CD4-positive, alpha-beta memory T cell (primary cell): ENCODE measurements at regions of chr1 and their contacts with region 1.

Region 1: GRCh38 chr1:61851849-61852669 is 109.8 kb downstream of the PATJ start:
- DNase-seq: peak; percentile 17 to 61 (median 48)
- H3K4me3 ChIP-seq: no peak overlapping the region
- H3K4me3 Mint-ChIP-seq: no peak overlapping the region
- H3K27ac ChIP-seq: no peak overlapping the region
- H3K27ac Mint-ChIP-seq: no peak overlapping the region
- H3K4me1 ChIP-seq: no peaks in the 10 kb centered on the region
- H3K4me1 Mint-ChIP-seq: peaks cover 0 to 2% (median under 1%) of the 10 kb centered on the region in 4 donors
- H3K27me3 ChIP-seq: no peaks in the 10 kb centered on the region
- H3K27me3 Mint-ChIP-seq: no peaks in the 10 kb centered on the region

Region 2: DNA sequence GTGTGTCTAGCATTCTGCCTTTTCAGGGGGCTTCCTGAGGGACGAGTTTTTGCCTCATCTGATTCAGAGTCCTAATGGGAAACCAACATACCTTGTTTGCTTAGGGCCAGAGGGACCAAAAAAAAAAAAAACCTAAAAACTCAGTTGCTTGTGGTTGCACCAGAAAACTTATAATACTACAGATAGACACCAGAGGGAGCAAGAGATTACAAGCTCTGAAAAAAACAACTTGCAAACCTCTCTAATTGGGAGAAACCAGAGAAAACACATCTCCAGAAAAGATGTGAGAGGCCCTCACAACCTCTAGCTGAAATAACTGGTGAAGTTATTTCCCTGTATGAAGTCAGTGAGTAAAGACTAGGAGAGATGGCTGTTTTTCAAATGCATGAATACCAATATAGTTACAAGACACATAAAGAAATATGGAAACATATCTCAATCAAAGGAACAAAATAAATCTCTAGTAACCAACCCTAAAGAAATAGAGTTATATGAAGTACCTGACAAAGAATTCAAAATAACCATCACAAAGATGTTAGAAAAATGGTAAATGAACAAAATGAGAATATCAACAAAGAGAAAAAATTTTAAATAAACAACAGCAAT is 1003.4 kb before region 1 on chr1:
- CTCF ChIA-PET with region 1: no interaction called
- POLR2A ChIA-PET with region 1: no interaction called
- intact Hi-C with region 1: loop called (anchors 5 kb)
- DNase-seq: peak in 2 of 5 donors; percentile 2 to 5
- H3K4me3 ChIP-seq: no peak overlapping the region
- H3K4me3 Mint-ChIP-seq: no peak overlapping the region
- H3K27ac ChIP-seq: no peak overlapping the region
- H3K27ac Mint-ChIP-seq: no peak overlapping the region
- H3K4me1 ChIP-seq: no peaks in the 10 kb centered on the region
- H3K4me1 Mint-ChIP-seq: no peaks in the 10 kb centered on the region
- H3K27me3 ChIP-seq: no peaks in the 10 kb centered on the region
- H3K27me3 Mint-ChIP-seq: peaks cover 4% of the 10 kb centered on the region in 2 donors

Region 3: GRCh38 chr1:61539720-61540462 is 312.2 kb before region 1 on chr1:
- CTCF ChIA-PET with region 1: interaction called, 19 read pairs
- POLR2A ChIA-PET with region 1: no interaction called
- intact Hi-C with region 1: no loop called
- DNase-seq: no peak
- H3K4me3 ChIP-seq: no peak overlapping the region
- H3K4me3 Mint-ChIP-seq: no peak overlapping the region
- H3K27ac ChIP-seq: no peak overlapping the region
- H3K27ac Mint-ChIP-seq: no peak overlapping the region
- H3K4me1 ChIP-seq: no peaks in the 10 kb centered on the region
- H3K4me1 Mint-ChIP-seq: peaks cover 0 to 5% (median under 1%) of the 10 kb centered on the region in 4 donors
- H3K27me3 ChIP-seq: no peaks in the 10 kb centered on the region
- H3K27me3 Mint-ChIP-seq: peaks cover 0 to 1% of the 10 kb centered on the region in 2 donors

Region 4: GRCh38 chr1:61588736-61589672 is 263.1 kb before region 1 on chr1:
- CTCF ChIA-PET with region 1: interaction called, 9 read pairs
- POLR2A ChIA-PET with region 1: no interaction called
- intact Hi-C with region 1: loop called (anchors 1 kb)
- DNase-seq: peak in 4 of 5 donors; percentile 25 to 40 (median 38)
- H3K4me3 ChIP-seq: no peak overlapping the region
- H3K4me3 Mint-ChIP-seq: no peak overlapping the region
- H3K27ac ChIP-seq: no peak overlapping the region
- H3K27ac Mint-ChIP-seq: no peak overlapping the region
- H3K4me1 ChIP-seq: no peaks in the 10 kb centered on the region
- H3K4me1 Mint-ChIP-seq: no peaks in the 10 kb centered on the region
- H3K27me3 ChIP-seq: no peaks in the 10 kb centered on the region
- H3K27me3 Mint-ChIP-seq: peaks cover 11 to 24% of the 10 kb centered on the region in 2 donors

Region 5: DNA sequence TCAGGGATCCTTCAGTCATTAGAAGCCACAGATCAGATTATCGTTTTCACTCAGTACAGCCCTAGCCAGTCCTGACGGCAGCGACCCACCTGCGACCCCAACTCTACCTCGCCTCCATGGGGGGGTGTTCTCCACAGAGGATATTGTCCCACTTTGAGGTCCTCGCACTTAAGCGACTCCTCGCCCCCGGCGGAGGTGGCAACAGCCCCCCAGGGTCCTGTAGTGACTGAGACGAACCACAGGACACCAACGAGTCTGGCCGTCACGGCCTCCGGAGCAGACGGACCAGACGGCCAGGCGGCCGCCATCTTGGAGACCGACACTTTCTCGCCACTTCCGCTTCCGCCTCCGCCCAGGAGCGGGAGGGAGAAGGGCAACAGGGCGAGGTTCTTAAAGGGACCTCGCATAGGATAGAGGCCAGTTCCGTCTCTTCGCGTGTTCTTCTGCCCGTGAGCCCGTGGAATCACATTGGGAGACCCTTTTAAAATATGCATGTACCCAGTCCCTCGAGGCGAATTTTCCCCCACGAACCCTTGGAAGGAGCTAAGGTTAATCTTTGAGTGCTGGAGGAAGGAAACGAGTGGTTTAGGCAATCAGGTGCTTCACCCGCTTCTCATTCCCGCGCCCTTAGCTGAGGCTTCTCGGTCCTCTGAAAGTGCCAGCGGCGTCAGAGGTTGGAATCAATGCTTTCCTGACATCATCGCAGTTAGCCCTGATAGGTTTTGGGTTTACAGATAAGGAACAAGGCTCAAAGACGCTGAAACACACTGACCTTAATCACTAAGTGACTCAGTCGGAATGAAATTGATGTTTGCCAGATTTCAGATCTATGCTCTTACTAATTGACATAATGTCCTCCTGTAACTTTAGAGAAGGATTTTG is 127.0 kb before region 1 on chr1 and contains the start of gene TM2D1:
- CTCF ChIA-PET with region 1: no interaction called
- POLR2A ChIA-PET with region 1: no interaction called
- intact Hi-C with region 1: loop called (anchors 10 kb)
- DNase-seq: peak; percentile 82 to 88 (median 83)
- H3K4me3 ChIP-seq: peak within 1 kb of the TSS; percentile 85 to 100
- H3K4me3 Mint-ChIP-seq: peak within 1 kb of the TSS; percentile 92 to 99 (median 96)
- H3K27ac ChIP-seq: peak within 1 kb of the TSS; percentile 88
- H3K27ac Mint-ChIP-seq: peak within 1 kb of the TSS; percentile 94 to 98 (median 98)
- H3K4me1 ChIP-seq: peaks cover 29% of the 10 kb centered on the region
- H3K4me1 Mint-ChIP-seq: peaks cover 14 to 39% (median 25%) of the 10 kb centered on the region in 4 donors
- H3K27me3 ChIP-seq: no peaks in the 10 kb centered on the region
- H3K27me3 Mint-ChIP-seq: no peaks in the 10 kb centered on the region
- total RNA-seq, gene TM2D1: 50.7 to 55.1 TPM

Region 6: GRCh38 chr1:61914823-61915482 is 62.9 kb after region 1 on chr1:
- CTCF ChIA-PET with region 1: no interaction called
- POLR2A ChIA-PET with region 1: no interaction called
- intact Hi-C with region 1: no loop called
- DNase-seq: no peak
- H3K4me3 ChIP-seq: no peak overlapping the region
- H3K4me3 Mint-ChIP-seq: no peak overlapping the region
- H3K27ac ChIP-seq: no peak overlapping the region
- H3K27ac Mint-ChIP-seq: peak overlapping the region in 1 of 7 donors; percentile 22
- H3K4me1 ChIP-seq: no peaks in the 10 kb centered on the region
- H3K4me1 Mint-ChIP-seq: no peaks in the 10 kb centered on the region
- H3K27me3 ChIP-seq: no peaks in the 10 kb centered on the region
- H3K27me3 Mint-ChIP-seq: no peaks in the 10 kb centered on the region

Region 7: DNA sequence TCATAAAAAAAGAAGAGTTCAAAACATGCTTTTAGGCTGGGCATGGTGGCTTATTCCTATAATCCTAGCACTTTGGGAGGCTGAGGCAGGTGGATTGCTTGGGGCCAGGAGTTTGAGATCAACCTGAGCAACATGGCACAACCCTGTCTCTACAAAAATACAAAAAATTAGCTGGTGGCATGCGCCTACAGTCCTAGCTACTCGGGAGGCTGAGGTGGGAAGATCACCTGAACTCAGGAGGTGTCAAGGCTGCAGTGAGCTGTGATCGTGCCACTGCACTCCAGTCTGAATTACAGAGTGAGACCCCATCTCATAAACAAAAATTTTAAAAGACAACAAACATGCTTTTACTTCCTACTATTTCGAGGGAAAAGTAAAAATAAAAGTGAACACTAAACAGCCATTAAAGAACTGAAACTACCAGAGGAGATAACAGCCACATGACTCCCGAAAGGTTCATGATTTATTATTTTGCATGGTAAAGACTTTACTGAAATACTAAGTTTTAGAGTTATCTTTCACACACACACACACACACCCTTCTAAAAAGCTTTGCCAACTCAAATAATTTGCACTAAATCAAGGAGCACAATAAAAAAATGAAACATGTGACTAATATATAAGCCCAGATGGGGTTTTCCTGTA is 632.9 kb after region 1 on chr1:
- CTCF ChIA-PET with region 1: no interaction called
- POLR2A ChIA-PET with region 1: no interaction called
- intact Hi-C with region 1: no loop called
- DNase-seq: no peak
- H3K4me3 ChIP-seq: no peak overlapping the region
- H3K4me3 Mint-ChIP-seq: no peak overlapping the region
- H3K27ac ChIP-seq: no peak overlapping the region
- H3K27ac Mint-ChIP-seq: peak overlapping the region in 1 of 7 donors; percentile 17
- H3K4me1 ChIP-seq: no peaks in the 10 kb centered on the region
- H3K4me1 Mint-ChIP-seq: no peaks in the 10 kb centered on the region
- H3K27me3 ChIP-seq: no peaks in the 10 kb centered on the region
- H3K27me3 Mint-ChIP-seq: no peaks in the 10 kb centered on the region